OCI-LY7 (cell line): ENCODE measurements at regions of chr16 and their contacts with region 1.

Region 1: GRCh38 chr16:84144859-84145639 is at the starts of genes DNAAF1 and HSDL1:
- DNase-seq: peak; percentile 92
- H3K4me3 ChIP-seq: peak within 1 kb of the TSS; percentile 74
- H3K27ac ChIP-seq: peak within 1 kb of the TSS; percentile 50
- H3K4me1 ChIP-seq: peaks cover 17% of the 10 kb centered on the region
- CTCF ChIP-seq: peak; percentile 50
- total RNA-seq, gene DNAAF1: 0.08 TPM in 1 of 2 replicates, not detected in the other
- total RNA-seq, gene HSDL1: 15.4 and 16.3 TPM in 2 replicates

Region 2: GRCh38 chr16:83856792-83857191 is 288.3 kb before region 1 on chr16:
- CTCF ChIA-PET with region 1: no interaction called
- POLR2A ChIA-PET with region 1: no interaction called
- intact Hi-C with region 1: no loop called
- DNase-seq: no peak
- H3K4me3 ChIP-seq: no peak overlapping the region
- H3K27ac ChIP-seq: no peak overlapping the region
- H3K4me1 ChIP-seq: no peaks in the 10 kb centered on the region
- CTCF ChIP-seq: no peak

Region 3: GRCh38 chr16:84065536-84066132 is 79.4 kb before region 1 on chr16:
- CTCF ChIA-PET with region 1: no interaction called
- POLR2A ChIA-PET with region 1: no interaction called
- intact Hi-C with region 1: no loop called
- DNase-seq: peak; percentile 59
- H3K4me3 ChIP-seq: no peak overlapping the region
- H3K27ac ChIP-seq: no peak overlapping the region
- H3K4me1 ChIP-seq: no peaks in the 10 kb centered on the region
- CTCF ChIP-seq: peak; percentile 82

Region 4: GRCh38 chr16:84116720-84117493 is 28.1 kb before region 1 on chr16 and contains the start of gene MBTPS1:
- CTCF ChIA-PET with region 1: no interaction called
- POLR2A ChIA-PET with region 1: interaction called, 15 read pairs
- intact Hi-C with region 1: no loop called
- DNase-seq: peak; percentile 97
- H3K4me3 ChIP-seq: peak within 1 kb of the TSS; percentile 84
- H3K27ac ChIP-seq: peak within 1 kb of the TSS; percentile 72
- H3K4me1 ChIP-seq: peaks cover 15% of the 10 kb centered on the region
- CTCF ChIP-seq: no peak
- total RNA-seq, gene MBTPS1: 39.4 and 49.6 TPM in 2 replicates

Region 5: GRCh38 chr16:84186685-84187437 is 41.8 kb after region 1 on chr16 and contains the start of gene TAF1C:
- CTCF ChIA-PET with region 1: no interaction called
- POLR2A ChIA-PET with region 1: interaction called, 3 read pairs
- intact Hi-C with region 1: loop called (anchors 5 kb)
- DNase-seq: peak; percentile 96
- H3K4me3 ChIP-seq: peak within 1 kb of the TSS; percentile 96
- H3K27ac ChIP-seq: peak within 1 kb of the TSS; percentile 40
- H3K4me1 ChIP-seq: peaks cover 9% of the 10 kb centered on the region
- CTCF ChIP-seq: peak; percentile 92
- total RNA-seq, gene TAF1C: 27.4 and 64.6 TPM in 2 replicates

Region 6: GRCh38 chr16:84198401-84198800 is 53.4 kb after region 1 on chr16:
- CTCF ChIA-PET with region 1: no interaction called
- POLR2A ChIA-PET with region 1: no interaction called
- intact Hi-C with region 1: no loop called
- DNase-seq: no peak
- H3K4me3 ChIP-seq: no peak overlapping the region
- H3K27ac ChIP-seq: no peak overlapping the region
- H3K4me1 ChIP-seq: no peaks in the 10 kb centered on the region
- CTCF ChIP-seq: no peak